Esophagus squamous epithelium (tissue), 5 donors: ENCODE measurements at regions of chr12 and their contacts with region 1.

Region 1: GRCh38 chr12:106357549-106358395 is at the start of gene POLR3B:
- DNase-seq: peak; percentile 87
- H3K4me3 ChIP-seq: peak within 1 kb of the TSS; percentile 54 to 82 (median 70)
- H3K27ac ChIP-seq: peak within 1 kb of the TSS; percentile 84 to 95 (median 92)
- H3K4me1 ChIP-seq: peaks cover 7 to 38% (median 11%) of the 10 kb centered on the region in 3 donors
- H3K27me3 ChIP-seq: no peaks in the 10 kb centered on the region
- CTCF ChIP-seq: peak; percentile 86 to 96 (median 92)
- POLR2A ChIP-seq: peak in 3 of 4 donors; percentile 41 to 79 (median 74)
- total RNA-seq, gene POLR3B: 10.7 to 16.2 (median 12.0) TPM

Region 2: DNA sequence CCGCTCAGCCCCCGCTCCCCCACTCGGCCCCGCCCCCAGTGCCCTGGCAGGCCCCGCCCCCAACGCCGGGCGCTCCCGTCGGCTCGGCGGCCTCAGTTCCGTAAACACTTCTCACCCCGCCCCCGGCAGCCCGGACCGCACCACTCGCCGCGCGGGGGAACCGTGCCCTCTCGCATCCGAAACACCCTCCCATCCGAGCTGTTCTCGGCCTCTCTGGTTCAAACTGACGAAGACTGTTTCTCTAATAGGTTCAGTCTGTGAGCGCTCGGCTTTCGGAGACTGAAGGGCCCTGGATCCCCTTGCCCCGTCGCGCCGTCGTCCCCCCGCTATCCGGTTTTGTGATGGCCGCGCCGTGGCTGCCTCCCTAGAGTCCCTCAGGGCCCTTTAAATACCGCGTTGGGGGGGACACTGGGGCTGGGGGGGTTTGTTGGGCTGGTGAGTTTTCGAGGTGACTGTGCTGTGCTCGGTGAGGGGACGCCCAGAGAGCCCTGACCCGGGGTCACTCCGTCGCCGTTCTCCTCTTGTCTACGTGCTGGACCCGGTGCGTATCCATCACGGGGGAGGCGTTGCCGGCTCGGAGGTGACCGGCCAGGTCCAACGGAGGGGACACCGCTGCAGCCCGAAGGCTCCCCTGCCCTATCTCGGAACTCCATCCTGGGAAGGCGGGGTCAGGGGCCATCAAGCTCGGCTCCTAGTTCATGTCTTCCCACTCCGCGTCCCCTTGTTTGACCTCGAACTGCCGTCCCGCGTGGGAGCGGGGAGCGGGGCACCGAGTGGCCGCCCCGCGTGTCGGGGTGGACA is 55.2 kb before region 1 on chr12 and contains the start of gene TCP11L2:
- intact Hi-C with region 1: loop called (anchors 10 kb)
- DNase-seq: peak; percentile 61
- H3K4me3 ChIP-seq: peak within 1 kb of the TSS; percentile 85 to 99 (median 90)
- H3K27ac ChIP-seq: peak within 1 kb of the TSS; percentile 96 to 99 (median 98)
- H3K4me1 ChIP-seq: peaks cover 0 to 81% (median 37%) of the 10 kb centered on the region in 3 donors
- H3K27me3 ChIP-seq: no peaks in the 10 kb centered on the region
- CTCF ChIP-seq: no peak
- POLR2A ChIP-seq: peak in 2 of 4 donors; percentile 54 to 61
- total RNA-seq, gene TCP11L2: 17.3 to 52.8 (median 27.7) TPM